Pancreas (tissue), 10 donors: ENCODE measurements at regions of chr7 and their contacts with region 1.

Region 1: GRCh38 chr7:5494683-5495561 is 71.3 kb upstream of the TNRC18 start:
- DNase-seq: peak; percentile 62 to 90 (median 82)
- ATAC-seq: peak; percentile 82 to 93 (median 88)
- H3K4me3 ChIP-seq: peak overlapping the region in 1 of 4 donors; percentile 10
- H3K27ac ChIP-seq: peak overlapping the region in 1 of 4 donors; percentile 12
- H3K4me1 ChIP-seq: peaks cover 16 to 19% (median 17%) of the 10 kb centered on the region in 3 donors
- H3K27me3 ChIP-seq: no peaks in the 10 kb centered on the region
- CTCF ChIP-seq: peak; percentile 80 to 91 (median 88)

Region 2: DNA sequence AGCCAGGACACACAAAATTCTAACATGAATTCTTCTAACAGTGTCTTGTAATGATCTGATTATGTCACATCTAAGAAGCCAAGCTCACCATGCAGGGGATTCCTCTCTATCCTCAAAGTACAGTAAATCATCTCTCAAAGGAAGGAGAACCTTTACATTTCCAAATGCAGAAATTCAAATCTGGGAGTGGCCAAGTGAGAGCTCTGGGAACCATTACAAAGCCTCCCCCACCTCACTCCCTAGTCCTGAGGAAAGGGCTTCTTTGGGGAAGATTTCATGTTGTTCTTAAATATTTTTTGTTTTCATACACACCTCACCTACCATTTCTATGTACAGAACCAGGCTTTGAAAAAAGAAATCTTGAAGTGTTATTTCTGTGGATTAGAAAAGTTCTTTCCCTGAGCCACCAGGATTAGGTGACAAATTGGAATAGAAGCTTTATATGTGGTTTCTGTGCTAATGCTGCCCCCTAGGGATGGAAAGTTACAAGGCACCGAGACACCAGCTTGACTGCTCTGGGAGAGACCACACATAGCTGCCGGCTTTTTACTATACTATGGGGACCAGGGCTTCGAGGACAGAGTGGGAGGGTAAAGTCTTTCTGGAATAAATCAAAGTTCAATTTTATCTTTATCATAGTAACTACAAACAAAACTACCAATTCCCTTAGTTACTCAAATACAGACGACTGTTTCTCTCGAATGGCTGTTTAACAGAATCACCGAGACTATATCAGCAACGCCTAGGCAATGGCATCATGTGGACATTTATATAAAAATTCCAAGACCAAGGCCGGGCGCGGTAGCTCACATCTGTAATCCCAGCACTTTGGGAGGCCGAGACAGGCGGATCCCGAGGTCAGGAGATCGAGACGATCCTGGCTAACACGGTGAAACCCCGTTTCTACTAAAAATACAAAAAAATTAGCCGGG is 170.4 kb after region 1 on chr7:
- intact Hi-C with region 1: loop called in 1 of 3 experiments (anchors 5 kb)
- DNase-seq: peak in 4 of 6 donors; percentile 39 to 76 (median 44)
- ATAC-seq: peak; percentile 76 to 90 (median 88)
- H3K4me3 ChIP-seq: no peak overlapping the region
- H3K27ac ChIP-seq: no peak overlapping the region
- H3K4me1 ChIP-seq: peaks cover 0 to 6% (median 0%) of the 10 kb centered on the region in 3 donors
- H3K27me3 ChIP-seq: no peaks in the 10 kb centered on the region
- CTCF ChIP-seq: peak; percentile 56 to 76 (median 58)

Region 3: GRCh38 chr7:5704534-5704922 is 209.6 kb after region 1 on chr7:
- intact Hi-C with region 1: loop called in 2 of 3 experiments (anchors 10 kb)
- DNase-seq: peak in 5 of 6 donors; percentile 61 to 86 (median 70)
- ATAC-seq: peak; percentile 86 to 91 (median 89)
- H3K4me3 ChIP-seq: no peak overlapping the region
- H3K27ac ChIP-seq: no peak overlapping the region
- H3K4me1 ChIP-seq: peaks cover 6 to 26% (median 25%) of the 10 kb centered on the region in 3 donors
- H3K27me3 ChIP-seq: no peaks in the 10 kb centered on the region
- CTCF ChIP-seq: peak; percentile 47 to 85 (median 80)